ENCODE measurements at regions of chr18 and their contacts with region 1.

Region 1: GRCh38 chr18:45275367-45276113 is 339.7 kb upstream of the SLC14A2 start:
- DNase-seq: no peak
- H3K4me3 ChIP-seq: no peak overlapping the region
- H3K27ac ChIP-seq: no peak overlapping the region
- H3K4me1 ChIP-seq: no peaks in the 10 kb centered on the region
- H3K27me3 ChIP-seq: no peaks in the 10 kb centered on the region
- CTCF ChIP-seq: peak; percentile 78
- EP300 ChIP-seq: no peak
- RAD21 ChIP-seq: peak; percentile 65

Region 2: GRCh38 chr18:45287531-45287930 is 12.0 kb after region 1 on chr18:
- CTCF ChIA-PET with region 1: interaction called, 21 read pairs
- POLR2A ChIA-PET with region 1: no interaction called
- DNase-seq: no peak
- H3K4me3 ChIP-seq: no peak overlapping the region
- H3K27ac ChIP-seq: no peak overlapping the region
- H3K4me1 ChIP-seq: peaks cover 0 to 10% of the 10 kb centered on the region in 2 experiments; a peak in 2 of 4 replicates
- H3K27me3 ChIP-seq: no peaks in the 10 kb centered on the region
- CTCF ChIP-seq: no peak
- EP300 ChIP-seq: no peak
- RAD21 ChIP-seq: no peak

Region 3: DNA sequence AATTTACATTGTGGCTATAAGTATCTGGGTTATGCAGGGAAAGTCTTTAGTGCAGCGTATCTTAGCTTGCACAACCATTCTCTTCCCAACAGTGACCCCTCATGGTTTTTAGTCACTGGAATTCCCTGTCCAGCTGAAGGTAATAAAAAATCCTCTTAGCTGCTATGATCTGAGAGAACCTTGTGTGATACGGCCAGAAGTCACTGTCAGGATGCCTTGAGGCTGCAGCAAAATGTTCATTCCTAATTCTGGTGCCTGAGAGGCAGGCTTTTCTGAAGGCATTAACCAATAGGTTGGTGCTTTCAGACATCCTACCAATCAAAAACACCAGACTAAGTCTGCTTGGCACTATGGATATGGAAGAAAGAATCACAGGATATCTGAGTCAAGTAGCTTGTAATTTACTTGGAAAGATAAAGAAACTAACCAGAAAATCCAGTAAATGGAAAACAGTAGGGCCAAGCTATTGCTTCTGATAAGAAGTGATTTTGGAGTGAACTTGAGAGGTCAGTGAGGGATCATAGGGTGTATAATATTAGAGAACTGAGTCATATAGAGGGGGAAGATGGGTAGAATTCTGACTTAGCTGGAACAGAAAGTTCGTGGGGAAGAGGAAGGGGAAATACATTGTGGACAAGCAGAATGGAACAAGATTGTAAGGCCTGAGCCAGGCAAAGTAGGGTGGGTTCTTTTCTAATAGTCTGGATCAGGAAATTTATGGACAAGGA is 250.7 kb after region 1 on chr18:
- CTCF ChIA-PET with region 1: interaction called, 18 read pairs
- POLR2A ChIA-PET with region 1: no interaction called
- DNase-seq: peak; percentile 19
- H3K4me3 ChIP-seq: no peak overlapping the region
- H3K27ac ChIP-seq: peak overlapping the region in 1 of 2 experiments; percentile 53; a peak in 1 of 4 replicates
- H3K4me1 ChIP-seq: peaks cover 3 to 9% of the 10 kb centered on the region in 2 experiments; a peak in 3 of 4 replicates
- H3K27me3 ChIP-seq: no peaks in the 10 kb centered on the region
- CTCF ChIP-seq: peak; percentile 37
- EP300 ChIP-seq: no peak
- RAD21 ChIP-seq: peak; percentile 77